CD8-positive, alpha-beta T cell (primary cell): ENCODE measurements at regions of chr2 and their contacts with region 1.

Region 1: GRCh38 chr2:68594674-68595492 is 48.5 kb upstream of the PROKR1 start:
- DNase-seq: peak; percentile 12 to 74 (median 54)
- ATAC-seq: peak; percentile 48
- H3K4me3 ChIP-seq: no peak overlapping the region
- H3K4me3 Mint-ChIP-seq: peak overlapping the region; percentile 17
- H3K27ac ChIP-seq: no peak overlapping the region
- H3K27ac Mint-ChIP-seq: no peak overlapping the region
- H3K4me1 ChIP-seq: no peaks in the 10 kb centered on the region
- H3K4me1 Mint-ChIP-seq: peaks cover 6% of the 10 kb centered on the region
- H3K27me3 ChIP-seq: no peaks in the 10 kb centered on the region
- H3K27me3 Mint-ChIP-seq: no peaks in the 10 kb centered on the region
- CTCF ChIP-seq: peak; percentile 96

Region 2: DNA sequence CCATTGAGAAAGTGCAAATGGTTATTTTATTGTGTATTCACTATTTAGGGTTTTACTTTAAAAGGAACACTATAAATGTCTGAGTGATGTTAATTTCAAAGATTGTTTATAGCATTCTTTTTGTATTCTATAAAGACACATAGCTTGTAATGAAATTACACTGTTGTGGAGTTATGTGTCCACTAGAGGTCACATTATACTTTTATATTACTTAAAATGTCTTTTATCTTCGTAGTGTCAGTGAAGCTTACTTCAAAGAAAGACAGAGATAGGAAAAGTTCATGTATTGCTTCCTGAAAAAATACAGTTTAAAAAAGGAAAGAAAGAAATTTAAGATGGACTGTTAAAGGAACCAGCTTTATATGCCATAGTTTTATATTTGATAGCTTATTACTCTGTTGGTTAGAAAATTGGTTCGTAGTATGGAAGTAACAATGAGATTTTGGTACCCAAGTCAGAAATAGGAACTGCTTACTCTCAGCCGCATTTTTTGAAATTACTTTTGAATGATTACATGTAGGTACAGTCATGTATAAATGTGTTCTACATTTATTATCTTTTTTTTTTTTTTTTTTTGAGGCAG is 107.0 kb before region 1 on chr2:
- CTCF ChIA-PET with region 1: interaction called, 61 read pairs
- POLR2A ChIA-PET with region 1: interaction called, 9 read pairs
- intact Hi-C with region 1: loop called in 1 of 2 experiments (anchors 1 kb)
- DNase-seq: peak in 2 of 9 experiments; percentile 36 to 54
- ATAC-seq: peak; percentile 71
- H3K4me3 ChIP-seq: no peak overlapping the region
- H3K4me3 Mint-ChIP-seq: no peak overlapping the region
- H3K27ac ChIP-seq: no peak overlapping the region
- H3K27ac Mint-ChIP-seq: no peak overlapping the region
- H3K4me1 ChIP-seq: no peaks in the 10 kb centered on the region
- H3K4me1 Mint-ChIP-seq: peaks cover 3% of the 10 kb centered on the region
- H3K27me3 ChIP-seq: no peaks in the 10 kb centered on the region
- H3K27me3 Mint-ChIP-seq: no peaks in the 10 kb centered on the region
- CTCF ChIP-seq: peak; percentile 65

Region 3: GRCh38 chr2:68556381-68556780 is 38.5 kb before region 1 on chr2:
- CTCF ChIA-PET with region 1: no interaction called
- POLR2A ChIA-PET with region 1: no interaction called
- intact Hi-C with region 1: no loop called
- DNase-seq: no peak
- ATAC-seq: no peak
- H3K4me3 ChIP-seq: no peak overlapping the region
- H3K4me3 Mint-ChIP-seq: no peak overlapping the region
- H3K27ac ChIP-seq: no peak overlapping the region
- H3K27ac Mint-ChIP-seq: no peak overlapping the region
- H3K4me1 ChIP-seq: no peaks in the 10 kb centered on the region
- H3K4me1 Mint-ChIP-seq: no peaks in the 10 kb centered on the region
- H3K27me3 ChIP-seq: no peaks in the 10 kb centered on the region
- H3K27me3 Mint-ChIP-seq: no peaks in the 10 kb centered on the region
- CTCF ChIP-seq: no peak

Region 4: GRCh38 chr2:68577183-68577582 is 17.7 kb before region 1 on chr2:
- CTCF ChIA-PET with region 1: interaction called, 11 read pairs
- POLR2A ChIA-PET with region 1: no interaction called
- intact Hi-C with region 1: no loop called
- DNase-seq: no peak
- ATAC-seq: no peak
- H3K4me3 ChIP-seq: no peak overlapping the region
- H3K4me3 Mint-ChIP-seq: no peak overlapping the region
- H3K27ac ChIP-seq: no peak overlapping the region
- H3K27ac Mint-ChIP-seq: no peak overlapping the region
- H3K4me1 ChIP-seq: no peaks in the 10 kb centered on the region
- H3K4me1 Mint-ChIP-seq: no peaks in the 10 kb centered on the region
- H3K27me3 ChIP-seq: no peaks in the 10 kb centered on the region
- H3K27me3 Mint-ChIP-seq: no peaks in the 10 kb centered on the region
- CTCF ChIP-seq: no peak

Region 5: DNA sequence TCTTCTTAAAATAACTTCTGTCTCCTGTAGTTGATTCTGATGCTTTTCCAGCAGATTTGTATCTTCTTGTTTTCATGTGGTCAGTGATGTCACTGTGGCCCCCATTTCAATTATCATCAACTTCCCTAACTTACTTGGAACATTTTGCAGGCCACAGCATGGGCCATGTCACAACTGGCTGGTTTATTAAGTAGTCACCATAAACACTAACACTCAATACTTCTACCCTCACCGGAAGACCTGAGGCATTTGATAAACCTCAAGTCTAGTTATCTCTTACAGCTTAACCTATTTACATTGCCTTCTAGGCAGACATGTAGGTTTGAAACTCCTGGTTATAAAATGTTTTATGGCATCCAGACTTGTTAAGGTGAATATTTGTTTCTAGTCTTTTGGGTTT is 11.1 kb after region 1 on chr2:
- CTCF ChIA-PET with region 1: interaction called, 5 read pairs
- POLR2A ChIA-PET with region 1: interaction called, 4 read pairs
- intact Hi-C with region 1: loop called in 1 of 2 experiments (anchors 2 kb)
- DNase-seq: no peak
- ATAC-seq: no peak
- H3K4me3 ChIP-seq: no peak overlapping the region
- H3K4me3 Mint-ChIP-seq: no peak overlapping the region
- H3K27ac ChIP-seq: no peak overlapping the region
- H3K27ac Mint-ChIP-seq: no peak overlapping the region
- H3K4me1 ChIP-seq: no peaks in the 10 kb centered on the region
- H3K4me1 Mint-ChIP-seq: no peaks in the 10 kb centered on the region
- H3K27me3 ChIP-seq: no peaks in the 10 kb centered on the region
- H3K27me3 Mint-ChIP-seq: no peaks in the 10 kb centered on the region
- CTCF ChIP-seq: no peak

Region 6: DNA sequence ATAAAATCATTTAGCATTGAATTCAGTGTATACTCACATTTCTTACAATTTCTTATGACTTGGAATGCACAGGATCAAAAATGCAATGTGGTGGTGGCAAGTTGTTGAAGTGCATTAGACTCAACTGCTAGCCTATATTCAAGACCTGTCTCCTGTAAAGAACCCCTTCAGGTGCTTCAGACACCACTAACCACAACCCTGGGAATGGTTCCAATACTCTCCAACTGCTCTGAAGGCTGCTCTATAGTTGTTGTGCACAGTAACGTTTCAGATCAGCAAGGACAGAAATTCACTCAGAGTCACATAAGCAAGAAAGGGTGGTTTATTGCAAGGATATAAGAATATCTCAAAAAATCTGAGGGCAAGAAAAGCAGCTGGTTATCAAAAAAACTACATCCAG is 386.1 kb after region 1 on chr2:
- CTCF ChIA-PET with region 1: no interaction called
- POLR2A ChIA-PET with region 1: no interaction called
- intact Hi-C with region 1: no loop called
- DNase-seq: no peak
- ATAC-seq: no peak
- H3K4me3 ChIP-seq: no peak overlapping the region
- H3K4me3 Mint-ChIP-seq: no peak overlapping the region
- H3K27ac ChIP-seq: no peak overlapping the region
- H3K27ac Mint-ChIP-seq: no peak overlapping the region
- H3K4me1 ChIP-seq: no peaks in the 10 kb centered on the region
- H3K4me1 Mint-ChIP-seq: no peaks in the 10 kb centered on the region
- H3K27me3 ChIP-seq: no peaks in the 10 kb centered on the region
- H3K27me3 Mint-ChIP-seq: peaks cover 30% of the 10 kb centered on the region
- CTCF ChIP-seq: no peak

Region 7: DNA sequence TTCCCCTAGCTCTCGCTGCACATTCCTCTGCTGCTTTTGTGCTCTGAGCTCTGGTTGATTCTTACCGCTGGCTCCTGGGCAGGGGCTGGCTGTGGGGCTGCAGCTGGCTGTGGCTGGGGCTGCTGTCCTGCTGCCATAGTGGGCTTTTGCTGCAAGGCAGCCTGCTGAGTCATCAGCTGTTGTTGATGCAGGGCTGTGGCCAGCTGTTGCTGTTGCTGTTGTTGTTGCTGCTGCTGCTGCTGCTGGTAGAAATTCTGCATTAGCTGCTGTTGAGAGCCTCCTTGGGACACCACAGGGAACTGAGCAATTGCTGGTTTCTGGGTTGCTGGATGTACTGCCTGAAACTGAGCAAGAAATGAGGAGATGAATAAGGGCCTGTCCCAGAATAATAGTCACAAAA is 919.5 kb after region 1 on chr2:
- CTCF ChIA-PET with region 1: no interaction called
- POLR2A ChIA-PET with region 1: no interaction called
- intact Hi-C with region 1: no loop called
- DNase-seq: no peak
- ATAC-seq: no peak
- H3K4me3 ChIP-seq: no peak overlapping the region
- H3K4me3 Mint-ChIP-seq: no peak overlapping the region
- H3K27ac ChIP-seq: no peak overlapping the region
- H3K27ac Mint-ChIP-seq: peak overlapping the region; percentile 43
- H3K4me1 ChIP-seq: no peaks in the 10 kb centered on the region
- H3K4me1 Mint-ChIP-seq: peaks cover 4% of the 10 kb centered on the region
- H3K27me3 ChIP-seq: no peaks in the 10 kb centered on the region
- H3K27me3 Mint-ChIP-seq: no peaks in the 10 kb centered on the region
- CTCF ChIP-seq: no peak